ENCODE measurements at regions of chr1 and their contacts with region 1.

Region 1: GRCh38 chr1:159854693-159855192 is 7.7 kb downstream of the VSIG8 start:
- DNase-seq: peak; percentile 83
- ATAC-seq: peak; percentile 95
- H3K4me3 Mint-ChIP-seq: peak overlapping the region; percentile 77
- H3K27ac Mint-ChIP-seq: peak overlapping the region; percentile 80
- H3K4me1 Mint-ChIP-seq: peaks cover 23% of the 10 kb centered on the region
- H3K27me3 Mint-ChIP-seq: no peaks in the 10 kb centered on the region
- CTCF ChIP-seq: peak; percentile 11

Region 2: DNA sequence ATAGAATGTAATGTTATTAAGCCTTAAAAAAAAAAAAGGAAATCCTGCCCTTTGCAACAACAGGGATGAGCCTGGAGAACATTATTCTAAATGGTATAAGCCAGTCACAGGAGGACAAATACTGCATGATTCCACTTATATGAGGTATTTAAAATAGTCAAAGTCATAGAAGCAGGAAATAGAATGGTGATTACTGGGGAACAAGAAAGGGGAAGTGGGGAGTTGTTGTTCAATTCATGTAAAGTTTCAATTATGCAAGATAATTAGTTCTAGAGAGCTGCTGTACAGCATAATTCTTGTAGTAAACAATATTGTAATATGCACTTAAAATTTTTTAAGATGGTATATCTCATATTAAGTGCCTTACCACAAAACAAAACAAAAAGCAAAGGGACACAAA is 539.4 kb before region 1 on chr1:
- CTCF ChIA-PET with region 1: no interaction called
- POLR2A ChIA-PET with region 1: no interaction called
- intact Hi-C with region 1: no loop called
- DNase-seq: no peak
- ATAC-seq: no peak
- H3K4me3 Mint-ChIP-seq: no peak overlapping the region
- H3K27ac Mint-ChIP-seq: no peak overlapping the region
- H3K4me1 Mint-ChIP-seq: no peaks in the 10 kb centered on the region
- H3K27me3 Mint-ChIP-seq: peaks cover 12% of the 10 kb centered on the region
- CTCF ChIP-seq: no peak

Region 3: DNA sequence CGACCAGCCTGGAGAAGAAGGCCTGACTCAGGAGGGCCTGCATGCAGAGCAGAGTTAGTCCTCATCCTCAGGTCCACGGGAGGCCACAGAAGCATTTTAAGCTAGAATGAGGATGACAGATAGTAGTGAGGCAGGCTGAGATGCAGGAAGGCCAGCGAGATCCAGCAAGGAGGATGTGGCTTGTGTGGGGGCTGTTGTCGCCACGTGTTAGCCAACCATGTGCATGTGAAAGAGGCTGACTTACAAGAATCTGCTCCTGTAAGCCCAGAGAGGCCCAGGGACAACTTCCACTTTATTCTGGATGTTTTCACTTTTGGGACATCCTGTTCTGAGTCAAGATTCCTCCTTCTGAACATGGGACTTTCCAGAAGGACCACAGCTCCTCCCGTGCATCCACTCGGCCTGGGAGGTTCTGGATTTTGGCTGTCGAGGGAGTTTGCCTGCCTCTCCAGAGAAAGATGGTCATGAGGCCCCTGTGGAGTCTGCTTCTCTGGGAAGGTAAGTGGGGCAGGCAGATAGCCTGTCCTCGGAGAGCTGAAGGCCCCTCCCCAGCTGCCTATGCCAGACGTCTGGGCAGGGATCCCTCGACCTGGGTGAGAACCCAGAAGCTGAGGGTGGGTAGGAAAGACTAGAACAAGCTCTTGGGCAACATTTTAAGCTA is 28.2 kb before region 1 on chr1 and contains the start of gene SLAMF8:
- CTCF ChIA-PET with region 1: interaction called, 13 read pairs
- POLR2A ChIA-PET with region 1: interaction called, 3 read pairs
- intact Hi-C with region 1: no loop called
- DNase-seq: peak; percentile 90
- ATAC-seq: peak; percentile 75
- H3K4me3 Mint-ChIP-seq: peak within 1 kb of the TSS; percentile 51
- H3K27ac Mint-ChIP-seq: peak within 1 kb of the TSS; percentile 88
- H3K4me1 Mint-ChIP-seq: peaks cover 53% of the 10 kb centered on the region
- H3K27me3 Mint-ChIP-seq: no peaks in the 10 kb centered on the region
- CTCF ChIP-seq: no peak
- total RNA-seq, gene SLAMF8: 0.54 TPM